ENCODE measurements at regions of chr9 and their contacts with region 1.

Region 1: DNA sequence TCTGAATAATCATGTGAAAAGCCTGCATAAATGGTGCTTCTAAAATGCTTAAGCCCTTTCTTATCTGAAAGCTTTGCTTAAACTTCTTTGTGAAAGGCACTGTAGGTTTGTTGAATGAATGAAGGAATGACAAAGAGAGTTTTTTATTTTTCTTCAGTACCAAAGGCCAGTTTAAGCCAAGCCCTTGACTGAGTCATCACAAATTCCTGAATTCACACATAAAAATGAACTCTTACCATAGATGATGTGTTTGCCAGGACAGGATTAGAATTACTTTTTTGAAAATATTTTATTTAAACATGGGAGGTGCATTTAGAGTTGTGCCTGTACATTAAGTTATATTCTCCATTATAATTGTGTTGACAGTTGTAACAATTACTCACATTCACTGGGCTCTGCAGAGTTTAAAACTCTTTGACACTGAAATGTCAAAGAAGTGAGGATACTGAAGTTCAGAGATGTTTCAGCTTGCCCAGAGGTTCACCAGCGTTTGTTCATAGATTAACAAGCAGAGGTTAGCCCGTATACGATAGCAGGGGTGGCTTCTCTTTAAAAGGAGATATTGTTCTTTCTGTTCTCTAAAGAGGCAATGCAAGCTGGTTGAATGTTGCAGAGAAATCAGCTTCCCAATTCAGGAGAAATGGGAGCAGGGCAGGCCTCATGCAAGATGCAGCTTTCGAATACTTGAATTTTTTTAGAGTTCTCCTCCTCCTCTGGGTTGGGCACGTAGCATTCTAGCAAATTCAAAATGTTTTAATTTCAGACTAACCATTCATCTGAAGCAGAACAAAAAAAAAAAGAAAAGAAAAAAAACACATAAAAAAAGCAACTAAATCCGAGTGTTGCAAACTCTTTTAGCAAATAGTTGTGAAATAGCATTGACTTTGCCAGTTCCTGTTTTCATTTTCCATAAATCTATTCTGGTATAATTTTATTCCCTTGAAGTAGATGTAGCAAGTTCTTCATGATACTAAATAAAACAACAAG is 358.7 kb upstream of the KLF4 start:
- H3K4me3 Mint-ChIP-seq: peak overlapping the region; percentile 32
- H3K27ac Mint-ChIP-seq: peak overlapping the region; percentile 86
- H3K4me1 Mint-ChIP-seq: peaks cover 51% of the 10 kb centered on the region
- H3K27me3 Mint-ChIP-seq: no peaks in the 10 kb centered on the region

Region 2: DNA sequence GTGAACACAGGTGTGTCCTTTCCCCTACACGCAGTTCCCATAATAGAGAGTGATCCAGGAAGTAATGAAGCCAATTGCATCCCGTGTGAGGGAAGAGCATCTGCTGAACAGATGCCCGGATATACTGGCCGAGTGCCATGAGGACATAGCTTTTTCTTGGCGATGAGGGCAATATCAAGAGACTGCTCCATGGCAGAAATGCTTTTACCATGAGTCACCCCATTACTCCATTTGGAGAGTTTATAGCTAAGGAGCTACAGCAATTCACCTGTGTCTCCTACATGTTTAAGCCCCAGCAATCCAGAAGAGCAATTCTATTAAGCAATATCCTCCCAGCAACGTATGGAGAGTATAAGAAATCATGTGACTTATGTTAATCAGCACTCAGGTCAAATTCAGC is 136.7 kb before region 1 on chr9:
- intact Hi-C with region 1: no loop called
- H3K4me3 Mint-ChIP-seq: no peak overlapping the region
- H3K27ac Mint-ChIP-seq: peak overlapping the region; percentile 39
- H3K4me1 Mint-ChIP-seq: peaks cover 33% of the 10 kb centered on the region
- H3K27me3 Mint-ChIP-seq: peaks cover 2% of the 10 kb centered on the region

Region 3: DNA sequence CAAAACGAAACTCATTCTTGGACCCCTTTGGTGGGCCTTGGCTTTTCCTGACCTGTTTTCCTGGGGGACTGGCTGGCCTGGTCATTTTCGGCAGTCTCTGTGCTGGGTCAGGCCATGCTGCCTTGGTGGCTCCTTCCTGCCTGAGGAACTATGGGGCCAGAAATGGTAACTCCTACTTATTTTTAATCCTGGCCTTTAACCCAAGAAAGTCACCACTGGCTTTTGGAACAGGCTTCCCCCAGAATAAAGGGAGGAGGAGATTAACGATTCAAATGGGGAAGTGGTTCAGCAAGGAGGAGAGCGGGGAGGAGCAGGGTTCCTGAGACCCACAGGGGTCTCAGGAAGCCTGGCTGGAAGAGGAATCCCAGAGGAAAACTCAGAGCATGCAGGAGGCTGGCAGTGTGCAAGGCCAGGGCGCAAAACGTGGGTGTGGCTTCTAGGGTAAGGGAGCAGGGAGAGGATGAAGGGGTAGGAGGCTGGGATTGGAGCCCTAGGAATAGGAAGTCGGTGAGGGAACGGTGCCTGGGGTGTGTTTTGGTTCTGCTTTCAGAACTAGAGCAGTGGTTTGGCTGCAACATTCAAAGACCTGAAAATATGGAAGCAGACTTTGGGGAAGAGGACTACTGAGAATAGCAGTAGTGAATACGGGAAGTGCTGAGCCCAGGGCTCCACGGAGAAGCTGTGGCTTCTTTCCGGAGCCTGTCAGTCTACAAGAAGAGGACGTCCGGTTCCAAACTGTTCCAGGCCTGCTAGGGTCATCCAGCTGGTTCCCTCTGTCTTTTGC is 87.6 kb before region 1 on chr9:
- intact Hi-C with region 1: loop called (anchors 10 kb)
- H3K4me3 Mint-ChIP-seq: peak overlapping the region; percentile 30
- H3K27ac Mint-ChIP-seq: peak overlapping the region; percentile 90
- H3K4me1 Mint-ChIP-seq: peaks cover 59% of the 10 kb centered on the region
- H3K27me3 Mint-ChIP-seq: no peaks in the 10 kb centered on the region

Region 4: GRCh38 chr9:107883496-107884124 is 35.3 kb after region 1 on chr9:
- intact Hi-C with region 1: no loop called
- H3K4me3 Mint-ChIP-seq: peak overlapping the region; percentile 26
- H3K27ac Mint-ChIP-seq: peak overlapping the region; percentile 84
- H3K4me1 Mint-ChIP-seq: peaks cover 57% of the 10 kb centered on the region
- H3K27me3 Mint-ChIP-seq: no peaks in the 10 kb centered on the region

Measured in dendritic cell treated with granulocyte-macrophage colony-stimulating factor and Interleukin-4, amounts not matched to agents 40 ng/mL and 50 ng/mL, for 4 days (primary cell).